Naive thymus-derived CD4-positive, alpha-beta T cell (primary cell): ENCODE measurements at regions of chr17 and their contacts with region 1.

Region 1: DNA sequence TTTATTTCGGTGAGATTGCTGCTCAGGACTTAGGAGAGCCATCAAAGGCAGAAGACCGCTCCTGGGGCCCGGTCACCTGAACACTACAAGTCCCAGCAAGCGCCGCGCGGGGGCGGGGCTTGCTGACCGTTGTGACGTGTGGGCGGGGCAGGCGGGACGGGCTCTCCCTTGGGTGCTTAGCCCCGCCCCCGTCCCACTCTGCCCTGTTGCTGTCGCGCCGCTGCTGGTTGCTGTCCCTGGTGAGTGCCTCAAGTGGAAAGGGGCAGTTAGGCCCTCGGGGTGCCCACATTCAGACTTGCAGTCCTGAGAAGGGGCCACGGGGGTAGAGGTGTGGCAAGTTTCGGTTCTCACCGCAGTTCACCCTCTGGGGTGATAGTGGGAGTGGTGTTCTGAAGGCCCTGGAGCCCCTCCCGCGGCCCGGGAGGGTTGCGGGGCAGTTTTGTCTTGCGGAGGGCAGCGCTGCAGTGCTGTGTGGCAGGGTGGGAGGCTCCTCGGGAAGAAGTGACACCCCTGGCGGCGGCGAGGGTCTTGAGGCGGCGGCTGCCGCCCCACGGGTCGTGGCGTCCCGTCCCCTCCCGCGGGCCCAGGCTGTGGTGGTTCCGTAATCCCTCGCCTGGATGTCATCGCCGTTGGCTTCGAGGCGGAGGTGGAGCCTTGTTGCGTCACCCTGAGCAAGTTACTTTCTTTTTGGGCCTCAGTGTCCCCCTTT is at the start of gene CALCOCO2:
- DNase-seq: peak; percentile 69 to 88 (median 77)
- ATAC-seq: peak; percentile 96
- H3K4me3 ChIP-seq: peak within 1 kb of the TSS; percentile 97
- H3K4me3 Mint-ChIP-seq: peak within 1 kb of the TSS; percentile 93 to 99 (median 97)
- H3K27ac ChIP-seq: peak within 1 kb of the TSS; percentile 92
- H3K27ac Mint-ChIP-seq: peak within 1 kb of the TSS; percentile 83 to 99 (median 99)
- H3K4me1 ChIP-seq: peaks cover 15 to 29% of the 10 kb centered on the region in 2 donors
- H3K4me1 Mint-ChIP-seq: peaks cover 32 to 63% (median 53%) of the 10 kb centered on the region in 7 donors
- H3K27me3 ChIP-seq: no peaks in the 10 kb centered on the region
- H3K27me3 Mint-ChIP-seq: peaks cover 0 to 2% (median 0%) of the 10 kb centered on the region in 5 donors
- total RNA-seq, gene CALCOCO2: 129 to 208 (median 139) TPM

Region 2: GRCh38 chr17:48107168-48108132 is 723.5 kb before region 1 on chr17 and contains the start of gene SNX11:
- CTCF ChIA-PET with region 1: no interaction called
- POLR2A ChIA-PET with region 1: no interaction called
- intact Hi-C with region 1: loop called in 1 of 2 experiments (anchors 10 kb)
- DNase-seq: peak; percentile 85 to 97 (median 94)
- ATAC-seq: peak; percentile 96
- H3K4me3 ChIP-seq: peak within 1 kb of the TSS; percentile 97
- H3K4me3 Mint-ChIP-seq: peak within 1 kb of the TSS; percentile 92 to 99 (median 96)
- H3K27ac ChIP-seq: peak within 1 kb of the TSS; percentile 89
- H3K27ac Mint-ChIP-seq: peak within 1 kb of the TSS; percentile 89 to 96 (median 93)
- H3K4me1 ChIP-seq: peaks cover 19 to 20% of the 10 kb centered on the region in 2 donors
- H3K4me1 Mint-ChIP-seq: peaks cover 45 to 68% (median 62%) of the 10 kb centered on the region in 7 donors
- H3K27me3 ChIP-seq: no peaks in the 10 kb centered on the region
- H3K27me3 Mint-ChIP-seq: no peaks in the 10 kb centered on the region
- total RNA-seq, gene SNX11: 12.3 to 35.1 (median 16.7) TPM

Region 3: DNA sequence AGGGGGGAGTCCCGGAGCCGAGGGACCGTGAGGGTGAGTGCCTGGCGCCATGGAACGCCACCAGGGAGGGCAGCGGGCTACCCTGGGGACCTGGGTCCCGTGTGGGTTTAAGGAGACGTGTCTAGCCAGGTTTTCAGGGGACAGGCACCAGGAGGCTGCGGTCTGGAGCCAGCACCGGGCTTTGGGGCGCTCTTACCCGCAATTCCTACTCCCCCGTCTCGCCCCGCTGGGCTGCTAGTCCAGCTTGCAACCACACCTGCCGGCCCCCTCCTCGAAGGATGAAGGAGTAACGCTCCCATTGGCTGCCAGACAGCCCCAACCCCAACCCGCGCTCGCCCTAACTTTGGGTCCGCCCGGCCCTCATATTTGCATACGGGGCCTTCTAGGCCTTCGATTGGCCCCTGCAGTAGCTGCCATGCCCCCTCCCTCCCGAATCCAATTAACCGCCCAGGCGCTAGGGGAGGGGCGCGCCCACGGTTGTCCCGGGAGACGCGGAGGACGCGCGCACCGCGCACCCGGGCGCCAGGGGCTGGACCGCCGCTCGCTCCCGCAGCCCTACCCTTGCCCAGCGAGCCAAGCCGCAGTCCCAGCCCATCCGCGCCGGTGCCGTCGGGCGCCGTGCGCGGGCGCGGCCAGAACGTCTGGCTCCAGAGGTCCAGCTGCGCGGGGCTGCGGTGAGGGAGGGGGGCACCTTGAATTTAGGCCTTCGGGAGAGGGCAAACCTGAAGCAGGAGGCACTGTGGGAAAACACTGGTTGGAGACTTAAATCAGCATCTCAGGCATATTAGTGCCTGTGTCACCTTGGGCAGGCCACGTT is 14.0 kb before region 1 on chr17 and contains the start of gene TTLL6:
- CTCF ChIA-PET with region 1: interaction called, 6 read pairs
- POLR2A ChIA-PET with region 1: interaction called, 4 read pairs
- intact Hi-C with region 1: loop called (anchors 1 to 2 kb)
- DNase-seq: peak; percentile 54 to 90 (median 80)
- ATAC-seq: peak; percentile 98
- H3K4me3 ChIP-seq: peak within 1 kb of the TSS; percentile 60
- H3K4me3 Mint-ChIP-seq: peak within 1 kb of the TSS; percentile 77 to 89 (median 85)
- H3K27ac ChIP-seq: no peak within 1 kb of the TSS
- H3K27ac Mint-ChIP-seq: peak within 1 kb of the TSS in 3 of 9 donors; percentile 3 to 74 (median 14)
- H3K4me1 ChIP-seq: peaks cover 0 to 13% of the 10 kb centered on the region in 2 donors
- H3K4me1 Mint-ChIP-seq: peaks cover 9 to 24% (median 15%) of the 10 kb centered on the region in 7 donors
- H3K27me3 ChIP-seq: no peaks in the 10 kb centered on the region
- H3K27me3 Mint-ChIP-seq: peaks cover 0 to 79% (median 17%) of the 10 kb centered on the region in 5 donors
- total RNA-seq, gene TTLL6: not detected

Region 4: GRCh38 chr17:48850792-48851323 is 19.9 kb after region 1 on chr17:
- CTCF ChIA-PET with region 1: interaction called, 3 read pairs
- POLR2A ChIA-PET with region 1: interaction called, 3 read pairs
- intact Hi-C with region 1: loop called in 1 of 2 experiments (anchors 2 kb)
- DNase-seq: peak in 2 of 9 donors; percentile 7 to 23
- ATAC-seq: no peak
- H3K4me3 ChIP-seq: no peak overlapping the region
- H3K4me3 Mint-ChIP-seq: peak overlapping the region in 2 of 10 donors; percentile 6 to 26
- H3K27ac ChIP-seq: no peak overlapping the region
- H3K27ac Mint-ChIP-seq: peak overlapping the region in 5 of 9 donors; percentile 1 to 37 (median 32)
- H3K4me1 ChIP-seq: no peaks in the 10 kb centered on the region
- H3K4me1 Mint-ChIP-seq: peaks cover 0 to 21% (median 13%) of the 10 kb centered on the region in 7 donors
- H3K27me3 ChIP-seq: no peaks in the 10 kb centered on the region
- H3K27me3 Mint-ChIP-seq: no peaks in the 10 kb centered on the region

Region 5: DNA sequence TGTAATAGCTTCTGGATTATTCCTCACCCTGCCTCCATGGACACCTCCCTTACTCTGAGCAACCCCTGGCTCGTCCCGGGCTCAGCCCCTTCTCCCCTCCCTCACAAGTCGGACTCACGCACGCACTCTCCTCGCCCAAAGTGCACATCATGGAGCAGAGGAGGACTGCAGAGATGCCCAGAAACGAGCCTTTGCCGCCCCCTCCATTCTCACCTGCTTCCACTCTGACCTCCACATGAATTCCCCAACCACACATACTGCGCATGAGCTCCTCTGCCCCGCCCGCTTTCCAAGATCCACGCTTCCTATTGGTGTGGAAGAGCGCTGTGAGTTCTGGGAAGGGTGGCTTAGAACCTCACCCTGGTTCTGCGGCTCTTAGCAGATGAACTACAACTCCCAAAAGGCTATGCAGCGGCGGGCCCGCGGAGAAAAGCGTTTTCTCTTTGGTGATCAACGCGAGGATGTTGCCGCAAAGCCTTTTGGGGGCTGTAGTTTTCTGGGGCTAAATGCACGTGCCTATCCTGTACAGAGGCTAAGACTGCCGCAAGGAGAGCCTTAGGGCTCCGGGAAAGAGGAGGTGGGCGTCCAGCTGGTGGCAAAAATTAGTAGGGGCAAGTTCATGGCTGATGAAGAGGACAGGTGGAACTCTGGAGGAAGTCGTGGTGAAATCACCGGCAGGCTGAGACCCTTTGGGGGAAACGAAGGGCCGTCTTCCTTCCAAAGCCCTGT is 583.8 kb after region 1 on chr17 and contains the start of gene PHB1:
- CTCF ChIA-PET with region 1: no interaction called
- POLR2A ChIA-PET with region 1: no interaction called
- intact Hi-C with region 1: loop called in 1 of 2 experiments (anchors 10 kb)
- DNase-seq: peak; percentile 75 to 98 (median 93)
- ATAC-seq: peak; percentile 99
- H3K4me3 ChIP-seq: peak within 1 kb of the TSS; percentile 77
- H3K4me3 Mint-ChIP-seq: peak within 1 kb of the TSS; percentile 92 to 99 (median 96)
- H3K27ac ChIP-seq: peak within 1 kb of the TSS; percentile 77
- H3K27ac Mint-ChIP-seq: peak within 1 kb of the TSS; percentile 78 to 99 (median 92)
- H3K4me1 ChIP-seq: peaks cover 8% of the 10 kb centered on the region in 2 donors
- H3K4me1 Mint-ChIP-seq: peaks cover 11 to 30% (median 26%) of the 10 kb centered on the region in 7 donors
- H3K27me3 ChIP-seq: no peaks in the 10 kb centered on the region
- H3K27me3 Mint-ChIP-seq: peaks cover 0 to 3% (median 0%) of the 10 kb centered on the region in 5 donors
- total RNA-seq, gene PHB1: 50.0 to 186 (median 54.4) TPM